ENCODE measurements at regions of chr1 and their contacts with region 1.

Region 1: DNA sequence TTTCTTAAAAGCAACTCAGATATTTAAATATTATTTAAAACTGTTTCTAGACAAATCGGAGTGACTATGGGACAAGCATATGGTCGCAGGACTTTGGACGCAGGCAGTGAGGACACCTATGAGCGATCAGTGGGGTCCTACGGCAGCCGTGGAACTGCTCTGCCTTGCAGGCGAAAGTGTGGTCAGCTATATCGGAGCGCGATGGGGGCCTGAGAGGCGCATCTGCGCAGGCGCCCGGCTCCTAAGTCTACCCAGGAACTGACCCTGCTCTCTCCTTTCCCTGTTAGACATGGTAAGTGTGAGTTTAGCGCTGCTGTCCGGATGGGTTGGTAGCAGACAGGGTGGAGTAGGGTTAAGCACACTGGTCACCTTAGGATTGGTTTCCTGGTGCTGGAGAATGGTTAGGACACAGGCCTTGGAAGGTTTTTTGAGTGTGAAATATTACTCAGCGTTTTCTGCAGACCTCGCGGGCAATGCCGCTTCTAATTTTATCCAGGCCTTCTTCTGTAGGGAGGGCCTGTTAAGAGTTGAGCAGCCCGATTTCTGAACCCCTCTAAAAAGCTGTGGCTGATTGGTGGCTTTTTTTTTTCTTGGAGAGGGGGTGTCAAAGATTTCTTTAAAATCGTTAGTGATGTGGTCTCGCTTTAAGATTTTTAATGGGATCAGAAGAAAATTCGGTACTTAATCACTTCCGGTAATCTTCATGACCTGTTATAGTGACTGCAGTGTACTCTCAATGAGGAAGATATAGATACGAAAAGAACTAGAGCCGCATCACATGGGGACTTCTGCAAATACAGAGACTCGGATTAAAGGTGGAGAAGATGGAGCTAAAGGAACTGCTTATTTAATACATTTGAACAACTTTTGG is at the start of gene RABGGTB:
- DNase-seq: peak; percentile 95
- ATAC-seq: peak; percentile 97
- H3K4me3 ChIP-seq: peak within 1 kb of the TSS; percentile 81 to 99
- H3K27ac ChIP-seq: peak within 1 kb of the TSS; percentile 100
- H3K4me1 ChIP-seq: peaks cover 33% of the 10 kb centered on the region
- H3K27me3 ChIP-seq: no peaks in the 10 kb centered on the region
- CTCF ChIP-seq: no peak
- total RNA-seq, gene RABGGTB: 77.9 TPM

Region 2: DNA sequence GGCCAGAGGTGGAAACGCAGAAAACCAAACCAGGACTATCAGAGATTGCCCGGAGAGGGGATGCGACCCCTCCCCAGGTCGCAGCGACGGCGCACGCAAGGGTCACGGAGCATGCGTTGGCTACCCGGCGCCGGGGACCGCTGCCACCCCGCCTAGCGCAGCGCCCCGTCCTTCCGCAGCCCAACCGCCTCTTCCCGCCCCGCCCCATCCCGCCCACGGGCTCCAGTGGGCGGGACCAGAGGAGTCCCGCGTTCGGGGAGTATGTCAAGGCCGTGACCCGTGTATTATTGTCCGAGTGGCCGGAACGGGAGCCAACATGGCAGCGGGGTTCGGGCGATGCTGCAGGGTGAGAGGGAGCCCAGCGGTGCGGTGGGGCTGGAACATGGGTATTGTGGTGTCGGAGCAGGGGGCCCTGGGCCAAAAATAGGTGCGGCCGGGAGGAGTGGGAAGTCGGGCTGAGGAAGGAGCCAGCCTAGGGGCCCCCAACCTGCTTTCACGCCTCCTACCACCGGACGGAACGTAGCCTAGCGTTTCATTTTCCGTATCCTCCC is 61.7 kb before region 1 on chr1 and contains the start of gene ACADM:
- CTCF ChIA-PET with region 1: no interaction called
- POLR2A ChIA-PET with region 1: interaction called, 3 read pairs
- in situ Hi-C with region 1: no loop called
- intact Hi-C with region 1: loop called (anchors 2 kb)
- DNase-seq: peak; percentile 30
- ATAC-seq: peak; percentile 98
- H3K4me3 ChIP-seq: peak within 1 kb of the TSS; percentile 76 to 92
- H3K27ac ChIP-seq: peak within 1 kb of the TSS; percentile 99
- H3K4me1 ChIP-seq: peaks cover 22% of the 10 kb centered on the region
- H3K27me3 ChIP-seq: no peaks in the 10 kb centered on the region
- CTCF ChIP-seq: no peak
- total RNA-seq, gene ACADM: 57.2 TPM

Region 3: DNA sequence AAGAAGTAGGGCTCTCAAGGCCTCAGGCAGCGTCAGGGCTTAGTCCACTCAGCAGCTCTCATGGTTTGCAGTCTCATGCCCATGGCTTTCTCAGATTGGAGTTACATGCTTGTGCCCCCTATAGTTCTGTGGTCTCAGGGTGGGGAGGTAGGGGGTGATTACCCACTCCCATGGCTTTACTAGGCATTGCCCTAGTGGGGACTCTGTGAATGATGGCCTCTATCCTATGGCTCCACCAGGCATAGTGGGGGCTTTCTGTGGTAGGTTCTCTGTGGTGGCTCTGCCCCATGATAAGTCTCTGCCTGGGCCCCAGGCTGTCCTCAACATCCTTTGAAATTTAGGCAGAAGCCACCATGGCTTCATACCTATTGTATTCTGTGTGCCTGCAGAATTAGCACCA is 59.4 kb after region 1 on chr1:
- CTCF ChIA-PET with region 1: no interaction called
- POLR2A ChIA-PET with region 1: no interaction called
- in situ Hi-C with region 1: no loop called
- intact Hi-C with region 1: no loop called
- DNase-seq: no peak
- ATAC-seq: no peak
- H3K4me3 ChIP-seq: no peak overlapping the region
- H3K27ac ChIP-seq: no peak overlapping the region
- H3K4me1 ChIP-seq: no peaks in the 10 kb centered on the region
- H3K27me3 ChIP-seq: no peaks in the 10 kb centered on the region
- CTCF ChIP-seq: no peak

Region 4: DNA sequence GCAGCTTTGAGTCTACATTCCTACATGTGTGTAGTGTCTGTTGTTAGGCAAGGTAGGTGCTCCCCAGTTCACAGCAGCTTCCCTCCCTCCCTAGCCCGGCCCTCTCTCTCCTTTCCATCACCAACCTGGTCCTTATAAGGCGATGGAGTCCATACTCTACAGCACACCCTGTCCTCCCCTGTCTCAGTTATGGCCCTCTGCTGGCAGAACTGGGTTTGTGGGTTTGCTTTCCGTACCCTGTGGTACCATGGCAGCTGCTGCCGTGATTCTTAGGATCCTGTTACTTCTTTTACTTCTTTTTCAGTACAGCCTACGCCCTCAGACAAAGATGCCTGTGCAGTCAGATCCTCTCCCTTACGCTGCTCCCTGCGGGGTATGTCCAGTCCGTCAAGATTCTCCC is 1527.3 kb after region 1 on chr1:
- CTCF ChIA-PET with region 1: no interaction called
- POLR2A ChIA-PET with region 1: interaction called, 14 read pairs
- in situ Hi-C with region 1: no loop called
- intact Hi-C with region 1: no loop called
- DNase-seq: no peak
- ATAC-seq: peak; percentile 96
- H3K4me3 ChIP-seq: no peak overlapping the region
- H3K27ac ChIP-seq: no peak overlapping the region
- H3K4me1 ChIP-seq: no peaks in the 10 kb centered on the region
- H3K27me3 ChIP-seq: no peaks in the 10 kb centered on the region
- CTCF ChIP-seq: peak; percentile 73

Measured in Panc1 (cell line).